ENCODE measurements at regions of chr3 and their contacts with region 1.

Region 1: DNA sequence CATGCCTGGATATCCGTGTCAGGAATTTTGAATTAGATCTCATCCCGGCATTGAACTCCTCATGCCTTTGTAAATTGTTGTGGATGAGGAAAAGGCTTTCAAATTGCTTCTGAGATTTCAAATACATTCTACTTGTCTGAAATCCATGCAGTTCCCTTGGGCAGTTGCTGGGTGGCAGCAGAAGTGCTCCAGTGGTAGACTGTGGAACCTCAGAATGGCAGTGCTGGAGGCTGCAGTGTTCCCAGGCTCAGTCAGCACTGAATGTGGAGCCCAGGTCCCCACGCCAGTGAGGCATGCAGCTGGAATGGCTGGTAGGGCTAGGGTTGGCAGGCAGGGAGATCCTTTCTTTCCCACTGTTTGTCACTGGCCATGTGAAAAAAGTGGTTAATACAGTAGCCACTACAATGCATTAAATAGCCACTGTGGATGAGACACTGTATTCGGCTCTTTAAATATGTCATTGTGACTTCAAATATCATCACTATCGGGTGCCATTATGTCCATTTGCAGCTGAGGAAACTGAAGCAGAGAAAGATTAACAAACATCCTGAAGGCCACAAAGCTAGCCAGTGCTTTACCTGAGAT is 98.6 kb downstream of the TPRG1 start:
- DNase-seq: peak; percentile 73 to 76
- H3K4me3 ChIP-seq: no peak overlapping the region
- H3K4me3 Mint-ChIP-seq: no peak overlapping the region
- H3K27ac Mint-ChIP-seq: no peak overlapping the region
- H3K4me1 ChIP-seq: no peaks in the 10 kb centered on the region
- H3K4me1 Mint-ChIP-seq: peaks cover 13% of the 10 kb centered on the region
- H3K27me3 ChIP-seq: no peaks in the 10 kb centered on the region
- H3K27me3 Mint-ChIP-seq: no peaks in the 10 kb centered on the region
- CTCF ChIP-seq: peak; percentile 66 to 90

Region 2: DNA sequence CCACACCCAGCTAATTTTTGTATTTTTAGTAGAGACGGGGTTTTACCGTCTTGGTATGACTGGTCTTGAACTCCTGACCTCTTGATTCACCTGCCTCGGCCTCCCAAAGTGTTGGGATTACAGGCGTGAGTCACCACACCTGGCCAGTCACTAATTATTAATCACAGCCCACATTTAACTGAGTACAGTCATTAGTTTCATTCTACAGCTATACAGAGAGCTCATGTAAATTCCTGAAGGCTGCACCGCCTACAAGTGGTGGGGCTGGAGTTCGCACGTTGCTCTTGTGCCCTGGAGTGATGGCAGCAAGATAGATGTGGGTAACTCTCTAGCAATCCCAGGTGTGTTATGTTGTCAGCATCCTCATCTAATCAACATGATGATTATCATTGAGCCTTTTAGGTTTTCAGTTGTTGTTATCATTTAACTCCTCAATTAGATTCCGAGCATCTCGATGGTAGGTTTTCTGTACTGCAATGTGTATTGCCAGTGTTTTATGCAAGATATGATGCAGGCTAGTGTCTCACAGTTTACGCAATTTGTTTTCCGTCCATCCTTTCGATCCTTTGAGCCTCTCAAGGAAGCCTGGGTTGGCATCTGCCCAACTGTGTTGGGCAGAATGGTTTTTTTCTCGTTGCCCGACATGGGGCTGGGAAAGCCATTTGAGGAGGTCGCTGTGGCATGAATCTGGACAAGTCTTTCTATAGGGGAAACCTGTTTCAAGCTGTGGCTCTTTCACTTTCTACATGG is 900.1 kb before region 1 on chr3:
- CTCF ChIA-PET with region 1: no interaction called
- POLR2A ChIA-PET with region 1: no interaction called
- intact Hi-C with region 1: no loop called
- DNase-seq: no peak
- H3K4me3 ChIP-seq: no peak overlapping the region
- H3K4me3 Mint-ChIP-seq: no peak overlapping the region
- H3K27ac Mint-ChIP-seq: no peak overlapping the region
- H3K4me1 ChIP-seq: peaks cover 3% of the 10 kb centered on the region; the same call in 1 of the 2 replicates
- H3K4me1 Mint-ChIP-seq: peaks cover 11% of the 10 kb centered on the region
- H3K27me3 ChIP-seq: no peaks in the 10 kb centered on the region
- H3K27me3 Mint-ChIP-seq: no peaks in the 10 kb centered on the region
- CTCF ChIP-seq: no peak

Region 3: DNA sequence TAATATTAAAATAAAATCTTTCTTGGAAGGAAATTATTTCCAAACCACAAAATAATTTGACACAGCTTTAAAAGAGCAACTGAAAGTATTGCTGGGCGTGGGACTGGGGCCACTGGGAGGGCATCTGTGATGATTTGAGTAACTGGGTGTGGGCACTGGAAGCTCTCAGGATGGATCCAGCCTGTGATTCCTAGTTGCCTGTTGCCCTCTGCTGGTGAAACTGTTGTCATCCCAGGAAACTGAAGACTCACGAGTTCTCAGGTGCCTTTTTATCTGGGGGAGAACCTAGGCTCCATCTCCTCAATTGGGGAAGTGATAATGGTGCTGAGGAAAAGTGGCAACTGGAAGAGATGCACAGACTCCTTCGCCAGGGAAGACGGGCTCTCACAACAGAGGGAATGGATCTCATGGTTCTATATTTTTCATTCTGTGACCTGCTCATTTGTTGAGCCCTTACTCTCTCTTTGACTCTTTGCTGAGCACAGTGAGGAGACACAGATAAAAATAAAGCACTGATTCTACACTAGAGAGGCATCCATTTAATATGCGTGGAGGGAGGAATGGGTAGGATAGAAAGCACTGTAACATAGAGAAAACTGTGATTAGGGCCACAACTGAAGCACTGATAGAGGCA is 37.0 kb before region 1 on chr3:
- CTCF ChIA-PET with region 1: no interaction called
- POLR2A ChIA-PET with region 1: no interaction called
- intact Hi-C with region 1: no loop called
- DNase-seq: peak; percentile 68 to 70
- H3K4me3 ChIP-seq: no peak overlapping the region
- H3K4me3 Mint-ChIP-seq: no peak overlapping the region
- H3K27ac Mint-ChIP-seq: no peak overlapping the region
- H3K4me1 ChIP-seq: peaks cover 8% of the 10 kb centered on the region; the same call in 1 of the 2 replicates
- H3K4me1 Mint-ChIP-seq: peaks cover 14% of the 10 kb centered on the region
- H3K27me3 ChIP-seq: no peaks in the 10 kb centered on the region
- H3K27me3 Mint-ChIP-seq: no peaks in the 10 kb centered on the region
- CTCF ChIP-seq: peak; percentile 79 to 81

Region 4: DNA sequence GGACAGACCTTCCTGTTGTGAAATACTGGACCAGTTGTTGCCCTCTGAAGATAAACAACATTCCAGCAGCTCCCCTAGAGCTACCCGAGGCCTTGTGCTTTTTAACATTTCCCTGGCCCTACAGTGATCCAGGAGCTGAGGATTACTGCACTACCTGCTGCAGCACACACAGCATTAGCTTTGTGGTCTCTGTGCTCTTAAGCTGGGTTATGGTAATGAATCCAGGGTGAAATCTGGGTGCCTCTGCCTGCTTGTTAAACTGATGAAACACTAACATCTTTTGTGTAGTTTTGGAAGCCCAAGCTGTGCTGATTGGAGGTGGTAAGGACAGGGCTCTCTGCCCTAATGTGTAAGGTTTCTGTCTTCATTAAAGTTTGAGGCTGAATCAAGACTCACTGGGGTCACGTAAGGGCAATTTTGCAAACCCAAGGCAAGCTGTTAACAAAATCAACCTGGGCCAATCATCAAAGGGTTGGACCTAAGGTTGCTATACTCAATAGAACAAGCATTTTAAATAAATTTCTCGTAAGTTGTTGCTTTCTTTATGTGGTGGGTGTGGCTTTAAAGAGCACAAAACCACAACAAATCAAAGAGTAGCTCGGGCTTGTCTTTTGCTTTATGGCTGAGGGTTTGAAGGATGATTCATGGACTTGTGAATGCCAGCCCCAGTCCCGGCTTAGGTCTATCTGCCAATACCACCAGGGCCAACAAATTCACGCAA is 85.3 kb after region 1 on chr3:
- CTCF ChIA-PET with region 1: interaction called, 6 read pairs
- POLR2A ChIA-PET with region 1: no interaction called
- intact Hi-C with region 1: loop called (anchors 5 kb)
- DNase-seq: peak; percentile 49 to 62
- H3K4me3 ChIP-seq: no peak overlapping the region
- H3K4me3 Mint-ChIP-seq: no peak overlapping the region
- H3K27ac Mint-ChIP-seq: peak overlapping the region; percentile 86
- H3K4me1 ChIP-seq: peaks cover 38% of the 10 kb centered on the region
- H3K4me1 Mint-ChIP-seq: peaks cover 19% of the 10 kb centered on the region
- H3K27me3 ChIP-seq: no peaks in the 10 kb centered on the region
- H3K27me3 Mint-ChIP-seq: no peaks in the 10 kb centered on the region
- CTCF ChIP-seq: no peak

Region 5: DNA sequence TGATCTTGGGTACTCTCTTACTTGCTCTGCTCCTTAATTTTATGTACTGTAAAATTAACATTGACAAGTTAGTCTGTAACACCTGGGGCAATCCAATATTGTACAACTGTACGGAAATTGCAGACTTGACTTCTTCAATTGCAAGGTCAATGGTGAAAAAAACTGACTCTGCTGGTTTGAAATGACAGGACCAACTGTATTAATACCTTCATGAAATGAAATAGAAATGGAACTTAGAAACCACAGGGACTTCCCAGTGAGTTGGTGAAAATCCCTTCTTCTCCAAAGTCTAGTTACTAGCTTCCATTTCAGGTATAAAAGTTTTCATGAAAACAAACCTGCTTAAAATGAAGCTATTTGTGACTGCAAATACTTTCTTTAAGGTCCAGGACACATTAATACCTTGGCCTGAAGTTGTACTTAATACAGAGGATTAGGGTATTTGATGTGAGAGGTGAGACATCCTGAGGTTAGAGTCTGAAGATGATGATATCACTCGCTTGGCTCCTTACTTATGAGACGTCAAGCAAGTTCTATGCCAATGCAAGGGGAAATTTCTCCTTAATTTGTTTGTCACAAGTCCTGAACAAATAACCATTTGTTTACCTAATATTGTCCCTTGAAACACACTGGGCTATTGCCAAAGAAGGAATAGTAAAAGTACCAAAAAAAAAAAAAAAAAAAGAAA is 134.6 kb after region 1 on chr3:
- CTCF ChIA-PET with region 1: no interaction called
- POLR2A ChIA-PET with region 1: no interaction called
- intact Hi-C with region 1: loop called (anchors 5 kb)
- DNase-seq: no peak
- H3K4me3 ChIP-seq: no peak overlapping the region
- H3K4me3 Mint-ChIP-seq: no peak overlapping the region
- H3K27ac Mint-ChIP-seq: no peak overlapping the region
- H3K4me1 ChIP-seq: no peaks in the 10 kb centered on the region
- H3K4me1 Mint-ChIP-seq: no peaks in the 10 kb centered on the region
- H3K27me3 ChIP-seq: no peaks in the 10 kb centered on the region
- H3K27me3 Mint-ChIP-seq: no peaks in the 10 kb centered on the region
- CTCF ChIP-seq: no peak

Region 6: GRCh38 chr3:189458532-189458931 is 188.2 kb after region 1 on chr3:
- CTCF ChIA-PET with region 1: no interaction called
- POLR2A ChIA-PET with region 1: no interaction called
- intact Hi-C with region 1: loop called (anchors 10 kb)
- DNase-seq: peak in 1 of 2 experiments; percentile 36
- H3K4me3 ChIP-seq: no peak overlapping the region
- H3K4me3 Mint-ChIP-seq: no peak overlapping the region
- H3K27ac Mint-ChIP-seq: no peak overlapping the region
- H3K4me1 ChIP-seq: no peaks in the 10 kb centered on the region
- H3K4me1 Mint-ChIP-seq: no peaks in the 10 kb centered on the region
- H3K27me3 ChIP-seq: no peaks in the 10 kb centered on the region
- H3K27me3 Mint-ChIP-seq: no peaks in the 10 kb centered on the region
- CTCF ChIP-seq: no peak

Region 7: DNA sequence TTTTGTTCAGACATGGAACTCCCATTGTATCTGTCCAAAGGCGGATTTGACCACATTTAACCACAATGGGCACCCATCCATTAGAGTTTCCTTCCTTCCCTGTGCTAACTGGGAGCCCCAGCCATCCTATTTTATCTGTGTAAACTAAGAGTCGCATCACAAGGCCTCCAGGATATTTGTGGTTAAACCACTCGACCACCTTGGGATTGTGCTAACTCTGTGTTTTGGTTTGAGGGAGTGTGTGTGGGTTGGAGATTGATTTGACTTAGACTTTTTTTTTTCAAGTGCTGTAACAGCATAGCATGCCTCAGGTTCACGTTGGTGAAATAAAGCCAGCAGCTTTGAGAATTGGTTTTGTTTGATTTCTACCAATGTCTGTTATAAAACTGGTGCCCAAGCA is 260.5 kb after region 1 on chr3:
- CTCF ChIA-PET with region 1: no interaction called
- POLR2A ChIA-PET with region 1: interaction called, 32 read pairs
- intact Hi-C with region 1: no loop called
- DNase-seq: no peak
- H3K4me3 ChIP-seq: no peak overlapping the region
- H3K4me3 Mint-ChIP-seq: no peak overlapping the region
- H3K27ac Mint-ChIP-seq: no peak overlapping the region
- H3K4me1 ChIP-seq: no peaks in the 10 kb centered on the region
- H3K4me1 Mint-ChIP-seq: no peaks in the 10 kb centered on the region
- H3K27me3 ChIP-seq: no peaks in the 10 kb centered on the region
- H3K27me3 Mint-ChIP-seq: no peaks in the 10 kb centered on the region
- CTCF ChIP-seq: no peak

Region 8: GRCh38 chr3:189652042-189652441 is 381.7 kb after region 1 on chr3:
- CTCF ChIA-PET with region 1: no interaction called
- POLR2A ChIA-PET with region 1: no interaction called
- intact Hi-C with region 1: loop called (anchors 5 kb)
- DNase-seq: peak; percentile 39 to 60
- H3K4me3 ChIP-seq: no peak overlapping the region
- H3K4me3 Mint-ChIP-seq: no peak overlapping the region
- H3K27ac Mint-ChIP-seq: no peak overlapping the region
- H3K4me1 ChIP-seq: no peaks in the 10 kb centered on the region
- H3K4me1 Mint-ChIP-seq: no peaks in the 10 kb centered on the region
- H3K27me3 ChIP-seq: no peaks in the 10 kb centered on the region
- H3K27me3 Mint-ChIP-seq: peaks cover 2% of the 10 kb centered on the region
- CTCF ChIP-seq: peak; percentile 56 to 64

Measured in Caco-2 (cell line).